GM12878 (cell line): ENCODE measurements at regions of chr1 and their contacts with region 1.

Region 1: GRCh38 chr1:47432071-47433036 is 5.5 kb upstream of the FOXD2 start:
- DNase-seq: peak; percentile 34
- ATAC-seq: peak; percentile 62
- H3K4me3 ChIP-seq: peak overlapping the region; percentile 54; the same call in 1 of the 2 replicates
- H3K27ac ChIP-seq: peak overlapping the region; percentile 38
- H3K4me1 ChIP-seq: peaks cover 23% of the 10 kb centered on the region
- H3K27me3 ChIP-seq: no peaks in the 10 kb centered on the region
- CTCF ChIP-seq: peak; percentile 77 to 81 (median 80)
- EP300 ChIP-seq: no peak
- POLR2A ChIP-seq: no peak
- RAD21 ChIP-seq: peak; percentile 54; the same call in 1 of the 2 replicates

Region 2: GRCh38 chr1:46062651-46063319 is 1369.6 kb before region 1 on chr1:
- CTCF ChIA-PET with region 1: no interaction called
- POLR2A ChIA-PET with region 1: no interaction called
- RAD21 ChIA-PET with region 1: no interaction called
- SMC1A ChIA-PET with region 1: no interaction called
- in situ Hi-C with region 1: no loop called
- intact Hi-C with region 1: no loop called
- DNase-seq: peak; percentile 51
- ATAC-seq: peak; percentile 86
- H3K4me3 ChIP-seq: no peak overlapping the region
- H3K27ac ChIP-seq: peak overlapping the region; percentile 3
- H3K4me1 ChIP-seq: peaks cover 9% of the 10 kb centered on the region
- H3K27me3 ChIP-seq: no peaks in the 10 kb centered on the region
- CTCF ChIP-seq: no peak
- EP300 ChIP-seq: 0 out of 4 replicates have a peak, but pooled peaks of 1 of the 2 experiments have one; percentile 32
- POLR2A ChIP-seq: no peak
- RAD21 ChIP-seq: no peak

Region 3: GRCh38 chr1:47418681-47419325 is 13.6 kb before region 1 on chr1:
- CTCF ChIA-PET with region 1: interaction called, 10 read pairs
- POLR2A ChIA-PET with region 1: no interaction called
- RAD21 ChIA-PET with region 1: no interaction called
- SMC1A ChIA-PET with region 1: interaction called, 4 read pairs
- in situ Hi-C with region 1: no loop called
- intact Hi-C with region 1: no loop called
- DNase-seq: no peak
- ATAC-seq: no peak
- H3K4me3 ChIP-seq: no peak overlapping the region
- H3K27ac ChIP-seq: no peak overlapping the region
- H3K4me1 ChIP-seq: no peaks in the 10 kb centered on the region
- H3K27me3 ChIP-seq: peaks cover 5 to 8% of the 10 kb centered on the region in 2 experiments; a peak in 3 of 4 replicates
- CTCF ChIP-seq: no peak
- EP300 ChIP-seq: no peak
- POLR2A ChIP-seq: no peak
- RAD21 ChIP-seq: no peak

Region 4: GRCh38 chr1:47471163-47471562 is 38.8 kb after region 1 on chr1:
- CTCF ChIA-PET with region 1: no interaction called
- POLR2A ChIA-PET with region 1: no interaction called
- RAD21 ChIA-PET with region 1: no interaction called
- SMC1A ChIA-PET with region 1: no interaction called
- in situ Hi-C with region 1: no loop called
- intact Hi-C with region 1: no loop called
- DNase-seq: no peak
- ATAC-seq: no peak
- H3K4me3 ChIP-seq: no peak overlapping the region
- H3K27ac ChIP-seq: no peak overlapping the region
- H3K4me1 ChIP-seq: no peaks in the 10 kb centered on the region
- H3K27me3 ChIP-seq: peaks cover 0 to under 1% of the 10 kb centered on the region in 2 experiments; a peak in 2 of 4 replicates
- CTCF ChIP-seq: no peak
- EP300 ChIP-seq: no peak
- POLR2A ChIP-seq: no peak
- RAD21 ChIP-seq: no peak

Region 5: DNA sequence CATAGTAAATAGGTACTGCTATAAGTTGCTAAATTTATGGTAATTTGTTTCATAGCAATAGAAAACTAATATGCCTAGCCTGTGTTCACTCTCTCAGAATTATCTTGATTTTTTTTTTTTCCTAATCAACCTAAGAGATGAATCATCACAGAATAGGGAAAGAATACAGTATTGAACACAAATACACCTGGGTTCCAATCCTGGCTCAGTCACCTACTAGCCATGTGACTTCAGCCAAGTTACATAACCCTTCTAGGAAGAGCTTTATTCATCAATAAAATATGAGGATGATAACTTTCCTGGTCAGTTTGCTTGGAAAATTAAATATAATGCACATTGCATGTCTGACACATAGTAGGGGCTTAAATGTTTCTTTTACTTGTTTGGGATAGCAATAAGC is 285.0 kb after region 1 on chr1:
- CTCF ChIA-PET with region 1: interaction called, 12 read pairs
- POLR2A ChIA-PET with region 1: no interaction called
- RAD21 ChIA-PET with region 1: no interaction called
- SMC1A ChIA-PET with region 1: interaction called, 10 read pairs
- in situ Hi-C with region 1: loop called (anchors 5 kb)
- intact Hi-C with region 1: no loop called
- DNase-seq: no peak
- ATAC-seq: no peak
- H3K4me3 ChIP-seq: no peak overlapping the region
- H3K27ac ChIP-seq: no peak overlapping the region
- H3K4me1 ChIP-seq: no peaks in the 10 kb centered on the region
- H3K27me3 ChIP-seq: peaks cover 0 to 4% of the 10 kb centered on the region in 2 experiments; a peak in 2 of 4 replicates
- CTCF ChIP-seq: no peak
- EP300 ChIP-seq: no peak
- POLR2A ChIP-seq: no peak
- RAD21 ChIP-seq: no peak